SK-N-SH (cell line): ENCODE measurements at regions of chr3 and their contacts with region 1.

Region 1: DNA sequence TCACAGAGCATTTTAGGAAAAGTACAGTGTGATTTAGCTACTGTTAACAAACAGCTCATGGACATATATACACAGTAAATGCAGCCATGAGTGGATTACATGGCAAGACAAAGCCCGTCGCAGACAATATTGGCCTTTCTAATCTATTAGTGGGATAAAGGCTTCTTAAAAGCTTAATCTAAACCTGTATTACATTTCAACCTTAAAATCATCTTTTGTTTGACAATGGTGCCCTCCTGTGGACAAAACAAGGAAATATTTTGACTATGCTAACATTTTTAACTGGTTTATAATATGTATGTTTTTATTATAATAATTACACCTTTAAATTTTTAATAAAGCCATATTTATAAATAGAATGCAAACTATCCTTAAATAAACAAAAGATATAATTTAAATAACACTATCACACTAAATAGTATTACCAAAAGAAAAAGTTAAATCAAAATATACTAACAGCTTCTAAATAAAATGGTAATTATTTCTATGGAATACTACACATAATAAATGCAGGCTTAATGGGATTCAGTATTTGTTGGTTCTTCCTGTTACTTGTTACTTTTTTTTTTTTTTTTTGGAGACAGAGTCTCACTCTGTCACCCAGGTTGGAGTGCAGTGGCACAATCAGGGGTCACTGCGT is 38.6 kb downstream of the TAFA4 start:
- DNase-seq: peak; percentile 10
- H3K4me3 ChIP-seq: no peak overlapping the region
- H3K27ac ChIP-seq: no peak overlapping the region
- H3K4me1 ChIP-seq: no peaks in the 10 kb centered on the region; a peak in 2 of 4 replicates
- H3K27me3 ChIP-seq: no peaks in the 10 kb centered on the region
- CTCF ChIP-seq: peak; percentile 60
- EP300 ChIP-seq: no peak
- RAD21 ChIP-seq: peak; percentile 68

Region 2: DNA sequence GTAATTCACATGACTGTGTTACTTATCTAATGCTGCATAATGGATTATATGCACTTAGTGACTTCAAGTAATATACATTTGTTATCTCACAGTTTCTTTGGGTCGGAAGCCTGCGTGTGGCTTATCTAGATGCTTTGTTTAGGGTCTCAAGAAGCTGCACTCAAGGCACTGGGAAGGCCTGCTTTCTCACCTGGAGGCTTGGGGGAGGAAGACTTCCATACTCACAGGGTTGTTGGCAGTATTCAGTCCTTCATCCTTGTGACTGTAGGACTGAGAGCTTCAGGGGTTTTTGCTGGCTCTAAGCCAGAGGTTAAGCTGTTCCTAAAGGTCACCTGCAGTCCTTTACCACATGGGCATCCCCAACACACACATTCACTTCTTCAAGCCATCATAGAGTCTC is 16.0 kb after region 1 on chr3:
- CTCF ChIA-PET with region 1: interaction called, 15 read pairs
- POLR2A ChIA-PET with region 1: no interaction called
- DNase-seq: no peak
- H3K4me3 ChIP-seq: no peak overlapping the region
- H3K27ac ChIP-seq: no peak overlapping the region
- H3K4me1 ChIP-seq: no peaks in the 10 kb centered on the region; a peak in 1 of 4 replicates
- H3K27me3 ChIP-seq: 0 out of 2 replicates have a peak, but pooled peaks cover 14% of the 10 kb centered on the region
- CTCF ChIP-seq: no peak
- EP300 ChIP-seq: no peak
- RAD21 ChIP-seq: no peak

Region 3: GRCh38 chr3:68972358-68972979 is 78.7 kb after region 1 on chr3:
- CTCF ChIA-PET with region 1: interaction called, 18 read pairs
- POLR2A ChIA-PET with region 1: no interaction called
- DNase-seq: peak; percentile 64
- H3K4me3 ChIP-seq: no peak overlapping the region; a peak in 1 of 4 replicates
- H3K27ac ChIP-seq: no peak overlapping the region
- H3K4me1 ChIP-seq: no peaks in the 10 kb centered on the region
- H3K27me3 ChIP-seq: peaks cover 18% of the 10 kb centered on the region; the same call in 1 of the 2 replicates
- CTCF ChIP-seq: peak; percentile 87
- EP300 ChIP-seq: no peak
- RAD21 ChIP-seq: peak; percentile 96

Region 4: DNA sequence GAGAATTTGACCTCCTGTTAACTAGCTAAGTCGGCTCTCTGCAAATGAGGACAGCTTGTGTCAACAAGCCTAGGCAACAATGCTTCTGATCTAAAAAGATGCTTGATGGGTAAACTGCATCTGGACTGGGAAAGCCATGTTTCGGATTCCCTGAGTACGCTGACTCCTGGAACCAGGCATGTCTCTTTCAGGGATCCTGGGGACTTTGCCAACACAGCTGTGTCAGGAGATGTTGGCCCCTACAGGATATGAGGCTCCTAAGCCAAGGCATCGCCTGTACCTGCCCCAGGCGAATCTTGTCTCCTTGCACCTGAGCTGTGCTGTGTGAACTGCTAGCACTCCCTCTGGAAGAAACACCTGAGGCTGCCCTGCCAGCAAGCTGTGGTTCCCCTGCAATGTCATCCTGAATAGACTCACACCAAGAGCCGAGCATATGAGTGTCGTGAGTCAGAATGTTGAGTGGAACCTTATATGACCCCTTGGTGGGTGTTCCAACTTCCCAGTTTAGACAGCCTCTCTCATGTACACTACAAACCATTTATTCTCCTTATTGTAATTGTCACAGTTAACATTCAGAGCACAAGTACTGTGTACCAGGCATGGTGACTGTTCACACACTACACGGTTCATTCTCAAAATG is 102.8 kb after region 1 on chr3:
- CTCF ChIA-PET with region 1: no interaction called
- POLR2A ChIA-PET with region 1: no interaction called
- DNase-seq: no peak
- H3K4me3 ChIP-seq: no peak overlapping the region
- H3K27ac ChIP-seq: no peak overlapping the region
- H3K4me1 ChIP-seq: no peaks in the 10 kb centered on the region
- H3K27me3 ChIP-seq: no peaks in the 10 kb centered on the region
- CTCF ChIP-seq: no peak
- EP300 ChIP-seq: no peak
- RAD21 ChIP-seq: no peak